ENCODE measurements at regions of chr17 and their contacts with region 1.

Region 1: DNA sequence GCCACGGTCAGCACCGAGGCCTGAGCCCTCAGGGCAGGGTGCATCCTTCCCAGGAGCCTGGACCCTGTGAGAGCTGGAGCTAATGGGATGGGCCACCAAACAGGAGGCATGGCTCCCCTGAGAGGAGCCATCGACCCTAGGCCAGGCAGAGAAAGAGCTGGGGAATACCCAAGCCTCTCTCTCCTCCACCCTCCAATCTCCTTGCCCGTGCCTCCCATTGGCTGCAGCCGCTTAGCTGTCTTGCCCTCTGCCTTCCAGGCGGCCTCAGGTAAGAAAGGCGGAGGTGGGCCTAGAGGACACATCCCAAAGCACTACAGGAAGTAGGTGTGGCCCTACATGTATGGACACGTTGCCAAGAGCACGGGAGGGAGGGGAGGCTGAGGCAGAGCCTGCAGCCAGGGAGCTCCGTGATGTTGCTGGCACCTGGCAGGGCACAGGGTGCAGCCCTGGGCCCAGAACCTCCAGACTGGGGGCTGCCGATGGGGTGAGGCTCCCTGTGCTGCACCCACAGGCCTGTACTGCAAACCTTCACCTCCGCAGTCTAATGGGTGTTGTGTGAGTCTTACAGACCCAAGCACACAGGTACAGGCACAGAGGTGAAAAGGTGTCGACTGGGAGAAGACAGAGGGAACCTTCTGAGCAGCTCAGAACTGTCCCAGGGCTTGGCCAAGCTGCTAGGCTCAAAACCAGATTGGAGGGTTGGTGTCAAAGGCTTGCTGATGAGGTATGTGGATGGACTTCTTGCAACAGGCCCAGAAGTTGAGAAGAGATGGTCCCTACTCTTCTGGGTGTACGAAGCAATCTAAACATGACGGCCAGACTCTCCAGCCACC is 23.6 kb upstream of the FOXK2 start:
- DNase-seq: peak in 1 of 35 experiments; percentile 24
- ATAC-seq: no peak
- H3K4me3 ChIP-seq: no peak overlapping the region
- H3K4me3 Mint-ChIP-seq: peak overlapping the region; percentile 70 to 85 (median 73)
- H3K27ac ChIP-seq: peak overlapping the region; percentile 60
- H3K27ac Mint-ChIP-seq: peak overlapping the region; percentile 39 to 79
- H3K4me1 ChIP-seq: peaks cover 0 to 34% of the 10 kb centered on the region in 2 experiments
- H3K4me1 Mint-ChIP-seq: peaks cover 16 to 23% (median 20%) of the 10 kb centered on the region in 3 donors
- H3K27me3 ChIP-seq: peaks cover 0 to 6% of the 10 kb centered on the region in 2 experiments
- H3K27me3 Mint-ChIP-seq: peaks cover 0 to 3% of the 10 kb centered on the region in 2 donors

Region 2: GRCh38 chr17:82258555-82258954 is 237.4 kb before region 1 on chr17:
- CTCF ChIA-PET with region 1: no interaction called
- POLR2A ChIA-PET with region 1: interaction called in 1 of 2 experiments, 11 read pairs
- DNase-seq: no peak
- ATAC-seq: no peak
- H3K4me3 ChIP-seq: no peak overlapping the region
- H3K4me3 Mint-ChIP-seq: no peak overlapping the region
- H3K27ac ChIP-seq: no peak overlapping the region
- H3K27ac Mint-ChIP-seq: peak overlapping the region in 1 of 2 donors; percentile 5
- H3K4me1 ChIP-seq: peaks cover 0 to 14% of the 10 kb centered on the region in 2 experiments
- H3K4me1 Mint-ChIP-seq: peaks cover 39 to 47% (median 46%) of the 10 kb centered on the region in 3 donors
- H3K27me3 ChIP-seq: no peaks in the 10 kb centered on the region
- H3K27me3 Mint-ChIP-seq: no peaks in the 10 kb centered on the region

Region 3: GRCh38 chr17:82483836-82484235 is 12.1 kb before region 1 on chr17:
- CTCF ChIA-PET with region 1: no interaction called
- POLR2A ChIA-PET with region 1: no interaction called
- DNase-seq: no peak
- ATAC-seq: no peak
- H3K4me3 ChIP-seq: no peak overlapping the region
- H3K4me3 Mint-ChIP-seq: no peak overlapping the region
- H3K27ac ChIP-seq: no peak overlapping the region
- H3K27ac Mint-ChIP-seq: no peak overlapping the region
- H3K4me1 ChIP-seq: peaks cover 0 to 15% of the 10 kb centered on the region in 2 experiments
- H3K4me1 Mint-ChIP-seq: peaks cover 10 to 25% (median 14%) of the 10 kb centered on the region in 3 donors
- H3K27me3 ChIP-seq: no peaks in the 10 kb centered on the region
- H3K27me3 Mint-ChIP-seq: no peaks in the 10 kb centered on the region

Region 4: GRCh38 chr17:82592767-82593589 is 97.1 kb after region 1 on chr17:
- CTCF ChIA-PET with region 1: no interaction called
- POLR2A ChIA-PET with region 1: no interaction called
- DNase-seq: peak; percentile 36 to 84 (median 59)
- ATAC-seq: peak; percentile 25 to 60 (median 42)
- H3K4me3 ChIP-seq: peak overlapping the region; percentile 55 to 63
- H3K4me3 Mint-ChIP-seq: peak overlapping the region; percentile 66 to 74 (median 73)
- H3K27ac ChIP-seq: peak overlapping the region; percentile 74
- H3K27ac Mint-ChIP-seq: peak overlapping the region; percentile 84 to 89
- H3K4me1 ChIP-seq: peaks cover 6 to 44% of the 10 kb centered on the region in 2 experiments
- H3K4me1 Mint-ChIP-seq: peaks cover 37 to 50% (median 44%) of the 10 kb centered on the region in 3 donors
- H3K27me3 ChIP-seq: no peaks in the 10 kb centered on the region
- H3K27me3 Mint-ChIP-seq: no peaks in the 10 kb centered on the region